HEK293 (cell line): ENCODE measurements at regions of chr21 and their contacts with region 1.

Region 1: DNA sequence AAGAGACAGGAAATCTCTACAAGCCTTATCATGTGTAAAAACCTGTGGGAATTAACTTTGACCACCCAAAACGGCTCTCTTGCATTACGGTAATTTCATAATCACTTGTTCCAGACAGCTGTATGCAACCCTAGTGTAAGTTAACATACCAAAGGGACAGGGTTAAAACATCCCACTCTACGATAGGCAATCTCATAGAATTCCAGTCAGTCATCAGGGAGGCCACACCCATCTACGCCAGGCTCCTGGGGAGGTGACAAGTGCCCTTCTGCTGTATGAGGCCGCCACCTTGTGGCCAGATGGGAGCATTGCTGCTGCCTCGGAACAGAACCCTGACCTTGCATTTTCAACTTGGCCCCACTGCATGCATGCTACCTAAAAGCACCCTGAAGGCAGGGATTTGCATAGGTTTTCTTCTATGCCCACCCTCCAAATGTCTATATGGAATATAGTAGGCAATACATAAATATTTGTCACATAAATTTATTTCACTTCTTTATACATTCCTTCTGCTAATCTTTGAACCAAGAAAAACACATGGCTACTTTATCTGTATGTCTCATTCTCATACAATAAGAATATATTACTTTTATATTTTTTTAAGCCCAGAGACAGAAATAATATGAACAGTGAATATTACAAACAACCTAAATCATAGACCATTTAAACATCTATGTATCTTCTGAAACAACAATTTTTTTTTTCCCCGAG is 12.6 kb downstream of the HSF2BP start:
- H3K4me3 ChIP-seq: no peak overlapping the region
- H3K27ac ChIP-seq: no peak overlapping the region
- H3K4me1 ChIP-seq: peaks cover 7% of the 10 kb centered on the region; the same call in 1 of the 2 replicates
- CTCF ChIP-seq: peak; percentile 95

Region 2: DNA sequence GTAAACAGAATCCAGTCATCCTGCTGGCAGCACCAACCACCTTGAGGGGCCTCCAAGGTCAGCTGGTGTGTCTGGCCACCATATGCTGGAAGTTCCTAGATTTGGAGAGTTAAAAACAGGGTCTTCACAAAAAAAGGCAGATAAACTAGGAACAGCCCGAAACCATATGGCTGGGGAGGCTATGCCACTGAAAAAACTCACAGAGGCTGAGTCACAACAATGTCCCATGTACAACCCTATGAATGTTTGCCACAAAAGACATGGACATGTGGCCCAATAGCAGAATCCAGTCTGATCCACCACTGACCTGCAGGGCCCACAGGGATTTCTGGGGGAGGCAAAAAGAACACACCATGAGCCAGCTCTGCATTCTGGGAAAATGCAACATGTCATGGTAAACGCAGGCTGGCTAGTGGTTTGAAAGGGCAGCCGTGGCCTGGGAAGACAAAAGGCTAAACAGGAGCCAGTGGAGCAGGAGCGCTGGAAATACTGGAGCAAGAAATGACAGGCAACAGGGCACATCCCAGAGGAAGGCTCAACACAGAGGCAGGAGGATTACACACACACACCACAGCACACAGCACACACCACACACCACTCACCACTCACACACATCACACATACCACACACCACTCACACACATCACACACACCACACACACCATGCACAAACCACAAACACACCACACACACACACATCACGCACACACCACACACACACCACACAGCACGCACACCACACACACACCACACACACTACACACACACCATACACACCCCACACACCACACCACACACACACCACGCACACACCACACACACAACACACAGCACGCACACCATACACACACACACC is 42.8 kb before region 1 on chr21:
- CTCF ChIA-PET with region 1: no interaction called
- POLR2A ChIA-PET with region 1: no interaction called
- H3K4me3 ChIP-seq: no peak overlapping the region
- H3K27ac ChIP-seq: no peak overlapping the region
- H3K4me1 ChIP-seq: peaks cover under 1% of the 10 kb centered on the region
- CTCF ChIP-seq: no peak

Region 3: DNA sequence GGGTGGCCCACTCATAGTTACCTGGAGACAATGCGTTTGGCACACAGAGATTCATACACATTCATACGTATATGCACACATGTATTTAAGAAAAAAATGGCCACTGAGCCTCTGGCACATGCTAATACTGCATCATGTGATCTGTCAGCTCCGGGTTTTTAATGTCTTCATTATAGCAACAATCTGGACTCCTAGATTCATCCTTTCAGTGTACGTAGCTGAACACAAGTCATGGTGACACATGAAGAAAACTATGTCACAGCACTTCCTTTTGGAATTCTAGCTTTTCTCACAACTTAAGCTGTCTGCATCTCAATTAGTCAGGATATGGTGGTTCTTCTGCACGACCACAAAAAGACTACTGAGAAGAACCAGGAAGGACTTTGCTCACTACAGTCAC is 12.1 kb before region 1 on chr21:
- CTCF ChIA-PET with region 1: interaction called, 11 read pairs
- POLR2A ChIA-PET with region 1: no interaction called
- H3K4me3 ChIP-seq: no peak overlapping the region
- H3K27ac ChIP-seq: no peak overlapping the region
- H3K4me1 ChIP-seq: no peaks in the 10 kb centered on the region
- CTCF ChIP-seq: no peak

Region 4: GRCh38 chr21:43687566-43688286 is 41.0 kb after region 1 on chr21:
- CTCF ChIA-PET with region 1: no interaction called
- POLR2A ChIA-PET with region 1: no interaction called
- H3K4me3 ChIP-seq: no peak overlapping the region
- H3K27ac ChIP-seq: no peak overlapping the region
- H3K4me1 ChIP-seq: no peaks in the 10 kb centered on the region
- CTCF ChIP-seq: no peak

Region 5: DNA sequence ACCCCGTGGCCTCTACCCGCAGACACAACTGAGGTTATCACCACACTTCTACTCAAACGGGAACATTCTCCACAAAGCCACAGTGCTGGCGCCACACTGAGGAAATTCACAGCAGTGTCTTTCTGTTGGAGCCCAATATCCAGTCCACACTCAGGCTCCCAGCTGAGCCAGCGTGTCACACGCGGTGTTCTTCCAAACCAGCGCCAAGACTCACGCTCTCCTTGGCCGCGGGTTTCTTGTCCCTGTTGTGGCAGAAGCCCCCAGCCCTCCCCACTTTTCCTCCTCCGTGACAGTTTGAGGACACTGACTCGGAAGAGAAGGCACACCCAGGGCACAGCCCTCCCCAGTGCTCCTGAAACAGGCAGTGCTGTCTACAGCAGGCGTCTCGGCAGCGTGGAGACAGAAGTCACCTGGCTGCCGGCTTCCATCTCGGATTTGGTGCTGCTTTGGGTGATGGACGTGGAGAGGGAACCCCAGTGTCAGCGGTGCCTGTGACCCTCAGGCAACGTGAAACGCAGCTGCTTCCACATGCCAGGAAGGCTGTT is 182.9 kb after region 1 on chr21:
- CTCF ChIA-PET with region 1: no interaction called
- POLR2A ChIA-PET with region 1: no interaction called
- H3K4me3 ChIP-seq: no peak overlapping the region
- H3K27ac ChIP-seq: no peak overlapping the region
- H3K4me1 ChIP-seq: no peaks in the 10 kb centered on the region
- CTCF ChIP-seq: no peak

Region 6: GRCh38 chr21:44329086-44329889 is 682.6 kb after region 1 on chr21:
- CTCF ChIA-PET with region 1: no interaction called
- POLR2A ChIA-PET with region 1: no interaction called
- H3K4me3 ChIP-seq: no peak overlapping the region
- H3K27ac ChIP-seq: 0 out of 2 replicates have a peak overlapping the region, but pooled peaks have one; percentile 2
- H3K4me1 ChIP-seq: no peaks in the 10 kb centered on the region
- CTCF ChIP-seq: no peak